ENCODE measurements at regions of chr12 and their contacts with region 1.

Region 1: GRCh38 chr12:12999959-13000615 is at the start of gene HEBP1:
- DNase-seq: peak; percentile 65 to 96
- H3K4me3 ChIP-seq: peak within 1 kb of the TSS; percentile 81 to 85
- H3K27ac ChIP-seq: peak within 1 kb of the TSS; percentile 93 to 97
- H3K4me1 ChIP-seq: peaks cover 10 to 25% of the 10 kb centered on the region in 2 donors
- H3K27me3 ChIP-seq: no peaks in the 10 kb centered on the region
- CTCF ChIP-seq: no peak
- total RNA-seq, gene HEBP1: 56.6 TPM

Region 2: GRCh38 chr12:12975322-12976077 is 24.6 kb before region 1 on chr12:
- intact Hi-C with region 1: loop called (anchors 1 kb)
- DNase-seq: peak in 1 of 2 donors; percentile 76
- H3K4me3 ChIP-seq: peak overlapping the region in 1 of 2 donors; percentile 35
- H3K27ac ChIP-seq: peak overlapping the region; percentile 87 to 91
- H3K4me1 ChIP-seq: peaks cover 5 to 34% of the 10 kb centered on the region in 2 donors
- H3K27me3 ChIP-seq: no peaks in the 10 kb centered on the region
- CTCF ChIP-seq: peak; percentile 16 to 66 (median 46)

Region 3: DNA sequence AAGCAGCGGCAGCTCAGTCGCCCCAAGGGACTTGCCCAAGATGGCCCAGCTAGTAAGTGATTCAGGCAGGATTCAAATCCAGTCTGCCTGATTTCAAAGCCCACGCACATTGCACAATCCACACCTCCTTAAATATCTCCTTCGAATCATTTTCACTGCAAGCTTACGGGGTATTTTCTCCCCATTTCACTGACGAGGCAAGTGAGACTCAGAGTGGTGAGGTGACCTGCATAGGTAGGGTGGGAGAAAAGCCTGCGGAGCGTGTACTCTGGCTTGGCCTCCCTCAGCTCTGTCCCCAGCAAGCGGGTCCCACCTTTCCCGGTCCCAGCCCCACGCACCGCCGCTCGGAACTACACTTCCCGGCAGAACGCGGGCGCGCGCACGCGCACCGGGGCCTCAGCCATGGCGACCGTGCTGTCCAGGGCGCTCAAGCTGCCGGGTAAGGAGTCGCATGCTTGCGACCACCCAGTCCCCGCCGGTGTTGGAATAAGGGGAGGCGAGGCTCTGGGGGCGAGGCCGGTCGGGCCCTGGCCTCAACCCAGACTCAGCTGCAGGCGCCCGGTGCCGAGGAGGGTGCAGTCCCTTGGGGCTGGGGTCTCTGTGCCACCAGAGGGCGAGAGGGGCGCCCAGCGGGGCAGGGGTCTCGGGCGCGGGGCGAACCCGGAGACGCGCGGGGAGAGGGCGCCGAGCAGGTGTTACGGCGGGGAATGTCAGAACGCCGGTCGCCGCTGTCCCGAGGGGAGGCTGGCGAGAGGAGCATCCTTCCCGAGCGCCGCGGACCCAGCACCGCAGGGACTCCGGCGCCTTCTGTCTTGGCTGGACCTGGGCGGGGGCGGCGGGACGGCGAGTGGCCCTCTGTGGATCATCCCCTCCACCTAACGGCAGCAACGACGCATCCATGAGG is 44.2 kb after region 1 on chr12 and contains the start of gene FAM234B:
- intact Hi-C with region 1: loop called (anchors 1 kb)
- DNase-seq: peak; percentile 14 to 91
- H3K4me3 ChIP-seq: peak within 1 kb of the TSS; percentile 90 to 97
- H3K27ac ChIP-seq: peak within 1 kb of the TSS; percentile 61 to 63
- H3K4me1 ChIP-seq: peaks cover 0 to 6% of the 10 kb centered on the region in 2 donors
- H3K27me3 ChIP-seq: no peaks in the 10 kb centered on the region
- CTCF ChIP-seq: peak in 2 of 3 experiments; percentile 10 to 35
- total RNA-seq, gene FAM234B: 6.7 TPM

Region 4: GRCh38 chr12:13211859-13212664 is 212.0 kb after region 1 on chr12:
- intact Hi-C with region 1: loop called (anchors 1 kb)
- DNase-seq: peak in 1 of 2 donors; percentile 84
- H3K4me3 ChIP-seq: no peak overlapping the region
- H3K27ac ChIP-seq: no peak overlapping the region
- H3K4me1 ChIP-seq: peaks cover 0 to 10% of the 10 kb centered on the region in 2 donors
- H3K27me3 ChIP-seq: no peaks in the 10 kb centered on the region
- CTCF ChIP-seq: peak; percentile 71 to 86 (median 78)